Caco-2 (cell line): ENCODE measurements at regions of chr1 and their contacts with region 1.

Region 1: DNA sequence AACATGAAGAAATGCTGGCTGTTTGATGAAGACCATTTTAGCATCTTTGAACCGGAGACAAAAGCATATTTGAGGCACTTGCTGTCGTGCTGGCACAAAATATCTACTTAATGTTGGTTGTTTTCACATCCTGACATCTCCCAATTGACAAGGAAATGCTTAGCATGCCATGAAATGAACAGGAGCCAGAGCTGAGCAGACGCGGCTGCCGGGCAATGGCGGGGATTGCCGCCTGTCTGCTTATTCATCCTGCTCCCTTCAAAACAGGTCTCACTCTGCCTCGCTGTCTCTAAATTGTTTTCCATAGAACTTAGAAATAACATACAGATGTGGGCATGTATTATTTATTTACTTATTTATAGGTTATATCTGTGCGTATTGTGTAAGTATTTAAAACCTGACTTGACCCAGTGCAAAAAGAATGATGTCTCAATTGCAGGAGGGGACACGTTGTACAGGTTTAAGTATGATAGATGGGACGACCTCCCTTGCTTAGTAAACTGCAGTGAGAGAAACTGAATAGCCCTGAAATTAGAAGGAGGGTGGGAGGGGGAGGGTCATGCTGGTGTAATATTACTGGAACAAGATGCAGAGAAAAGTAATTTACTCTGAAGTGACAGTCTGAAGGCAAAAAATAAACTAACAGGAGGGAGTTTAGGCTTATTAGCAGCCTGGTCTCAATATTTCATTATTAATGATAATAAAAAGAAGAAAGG is 590.4 kb upstream of the PLXNA2 start:
- DNase-seq: no peak
- H3K4me3 ChIP-seq: no peak overlapping the region
- H3K4me3 Mint-ChIP-seq: no peak overlapping the region
- H3K27ac Mint-ChIP-seq: no peak overlapping the region
- H3K4me1 ChIP-seq: no peaks in the 10 kb centered on the region
- H3K4me1 Mint-ChIP-seq: no peaks in the 10 kb centered on the region
- H3K27me3 ChIP-seq: no peaks in the 10 kb centered on the region; the same call in 1 of the 2 replicates
- H3K27me3 Mint-ChIP-seq: peaks cover 9% of the 10 kb centered on the region
- CTCF ChIP-seq: no peak

Region 2: GRCh38 chr1:208528578-208529240 is 305.8 kb before region 1 on chr1:
- CTCF ChIA-PET with region 1: no interaction called
- POLR2A ChIA-PET with region 1: no interaction called
- intact Hi-C with region 1: loop called (anchors 5 kb)
- DNase-seq: no peak
- H3K4me3 ChIP-seq: no peak overlapping the region
- H3K4me3 Mint-ChIP-seq: no peak overlapping the region
- H3K27ac Mint-ChIP-seq: no peak overlapping the region
- H3K4me1 ChIP-seq: no peaks in the 10 kb centered on the region
- H3K4me1 Mint-ChIP-seq: no peaks in the 10 kb centered on the region
- H3K27me3 ChIP-seq: peaks cover 2% of the 10 kb centered on the region; the same call in 1 of the 2 replicates
- H3K27me3 Mint-ChIP-seq: peaks cover 30% of the 10 kb centered on the region
- CTCF ChIP-seq: no peak

Region 3: DNA sequence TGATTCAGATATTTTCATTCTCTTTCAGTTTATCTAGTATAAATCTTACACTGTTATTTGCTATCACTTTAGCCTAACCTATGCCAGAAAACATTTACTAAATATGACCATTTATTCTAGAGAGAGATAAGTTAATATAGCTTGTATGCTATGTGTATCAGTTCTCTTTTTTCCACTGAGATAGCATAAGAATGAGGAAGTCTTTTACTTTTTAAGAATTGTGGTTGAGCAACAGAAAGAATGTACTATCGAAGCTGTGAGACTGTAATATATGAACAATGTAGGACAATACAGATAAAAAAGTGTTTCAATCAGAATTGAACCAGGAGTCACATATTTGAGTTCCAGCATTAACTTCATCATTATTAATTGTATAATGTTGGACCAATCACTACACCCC is 110.5 kb before region 1 on chr1:
- CTCF ChIA-PET with region 1: no interaction called
- POLR2A ChIA-PET with region 1: no interaction called
- intact Hi-C with region 1: no loop called
- DNase-seq: no peak
- H3K4me3 ChIP-seq: no peak overlapping the region
- H3K4me3 Mint-ChIP-seq: no peak overlapping the region
- H3K27ac Mint-ChIP-seq: no peak overlapping the region
- H3K4me1 ChIP-seq: no peaks in the 10 kb centered on the region
- H3K4me1 Mint-ChIP-seq: no peaks in the 10 kb centered on the region
- H3K27me3 ChIP-seq: no peaks in the 10 kb centered on the region
- H3K27me3 Mint-ChIP-seq: peaks cover 4% of the 10 kb centered on the region
- CTCF ChIP-seq: no peak

Region 4: GRCh38 chr1:208855403-208855802 is 20.9 kb after region 1 on chr1:
- CTCF ChIA-PET with region 1: no interaction called
- POLR2A ChIA-PET with region 1: no interaction called
- intact Hi-C with region 1: no loop called
- DNase-seq: no peak
- H3K4me3 ChIP-seq: no peak overlapping the region
- H3K4me3 Mint-ChIP-seq: no peak overlapping the region
- H3K27ac Mint-ChIP-seq: no peak overlapping the region
- H3K4me1 ChIP-seq: no peaks in the 10 kb centered on the region
- H3K4me1 Mint-ChIP-seq: no peaks in the 10 kb centered on the region
- H3K27me3 ChIP-seq: no peaks in the 10 kb centered on the region
- H3K27me3 Mint-ChIP-seq: peaks cover 8% of the 10 kb centered on the region
- CTCF ChIP-seq: no peak